Caki2 (cell line): ENCODE measurements at regions of chr4 and their contacts with region 1.

Region 1: DNA sequence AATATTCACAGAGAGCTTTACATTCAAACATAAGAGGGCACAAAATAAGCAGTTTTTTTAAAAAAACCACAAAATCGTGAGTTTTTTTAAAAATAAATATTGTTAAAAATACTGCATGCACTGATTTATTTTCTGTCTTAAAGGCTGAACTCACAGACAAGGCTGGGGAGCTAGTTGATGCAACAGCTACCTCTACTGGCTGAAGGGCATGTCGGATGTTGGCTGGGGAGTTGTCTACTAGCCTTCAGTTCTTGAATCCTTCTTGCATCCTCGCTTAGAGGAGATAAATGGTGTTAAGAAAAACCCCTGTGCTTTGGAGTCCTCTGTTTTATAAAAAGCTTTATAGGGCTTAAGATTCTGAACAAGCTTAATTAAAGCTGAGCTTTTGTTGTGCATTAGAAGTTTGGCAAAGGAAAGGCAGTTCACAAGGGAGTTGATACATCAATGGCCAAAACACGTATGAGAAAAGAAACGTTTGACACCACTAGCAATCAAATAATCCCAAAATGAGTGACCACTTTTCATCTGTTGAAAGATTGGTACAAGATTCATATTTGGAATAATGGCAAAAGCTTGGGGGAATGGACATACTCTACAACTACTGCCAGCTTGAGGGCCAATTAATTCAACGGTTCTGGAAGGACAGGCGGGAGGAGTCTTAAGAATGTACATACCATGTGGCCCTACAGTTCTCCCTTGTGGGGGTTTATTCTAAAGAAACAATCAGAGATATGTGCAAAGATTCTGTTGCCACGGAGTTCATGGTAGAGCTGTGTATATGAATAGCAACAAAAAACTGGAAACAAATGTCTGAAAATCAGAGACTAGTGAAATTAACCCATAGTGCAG is 94.7 kb downstream of the SEL1L3 start:
- DNase-seq: peak; percentile 44

Region 2: DNA sequence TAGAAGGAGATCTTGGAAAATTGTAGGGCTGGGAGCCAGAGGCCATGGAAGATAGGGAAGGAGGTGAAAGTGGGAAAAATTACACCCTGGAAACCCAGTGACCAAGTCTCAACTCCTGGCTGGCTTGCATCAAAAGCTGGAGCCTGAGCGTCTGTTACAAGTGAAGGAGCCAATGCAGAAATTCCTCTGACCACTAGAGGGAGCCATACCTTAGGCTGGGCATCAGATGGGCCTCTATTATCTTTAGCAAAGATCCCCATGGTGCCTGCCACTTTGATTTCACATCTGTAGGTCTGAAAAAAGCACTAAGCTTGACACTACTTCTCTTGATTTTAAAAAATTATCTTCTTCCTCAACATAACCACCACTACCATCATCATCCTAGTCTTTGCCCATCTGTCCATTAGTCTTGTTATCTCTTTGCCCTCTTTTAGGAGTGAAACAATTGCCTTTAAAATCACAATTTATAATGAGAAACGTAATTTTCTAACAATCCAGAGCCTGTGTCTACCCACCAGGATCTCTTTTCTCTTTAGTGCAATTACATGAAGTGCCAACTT is 328.1 kb before region 1 on chr4:
- in situ Hi-C with region 1: loop called (anchors 5 kb)
- DNase-seq: peak; percentile 43

Region 3: GRCh38 chr4:25970691-25971432 is 202.8 kb after region 1 on chr4:
- in situ Hi-C with region 1: no loop called
- DNase-seq: no peak

Region 4: DNA sequence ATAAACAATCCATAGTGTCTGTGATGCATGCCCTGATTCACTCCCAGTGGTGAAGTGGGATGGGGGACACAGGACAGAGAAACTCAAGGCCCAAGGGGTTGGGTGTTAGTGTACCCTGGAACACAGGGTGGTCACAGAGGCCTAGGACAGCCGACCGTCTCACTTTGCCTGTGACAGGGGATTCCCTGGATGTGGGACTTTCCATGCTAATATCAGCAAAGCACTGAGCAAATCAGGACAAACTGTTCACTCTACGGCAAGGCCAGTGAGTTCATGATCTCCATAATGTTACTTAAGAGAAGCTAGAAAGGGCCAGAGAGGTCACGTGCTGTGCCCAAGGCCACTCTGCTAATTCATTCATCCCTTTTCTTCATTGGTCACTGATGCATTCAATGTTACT is 394.0 kb after region 1 on chr4:
- in situ Hi-C with region 1: no loop called
- DNase-seq: no peak